PC-3 (cell line): ENCODE measurements at regions of chr5 and their contacts with region 1.

Region 1: DNA sequence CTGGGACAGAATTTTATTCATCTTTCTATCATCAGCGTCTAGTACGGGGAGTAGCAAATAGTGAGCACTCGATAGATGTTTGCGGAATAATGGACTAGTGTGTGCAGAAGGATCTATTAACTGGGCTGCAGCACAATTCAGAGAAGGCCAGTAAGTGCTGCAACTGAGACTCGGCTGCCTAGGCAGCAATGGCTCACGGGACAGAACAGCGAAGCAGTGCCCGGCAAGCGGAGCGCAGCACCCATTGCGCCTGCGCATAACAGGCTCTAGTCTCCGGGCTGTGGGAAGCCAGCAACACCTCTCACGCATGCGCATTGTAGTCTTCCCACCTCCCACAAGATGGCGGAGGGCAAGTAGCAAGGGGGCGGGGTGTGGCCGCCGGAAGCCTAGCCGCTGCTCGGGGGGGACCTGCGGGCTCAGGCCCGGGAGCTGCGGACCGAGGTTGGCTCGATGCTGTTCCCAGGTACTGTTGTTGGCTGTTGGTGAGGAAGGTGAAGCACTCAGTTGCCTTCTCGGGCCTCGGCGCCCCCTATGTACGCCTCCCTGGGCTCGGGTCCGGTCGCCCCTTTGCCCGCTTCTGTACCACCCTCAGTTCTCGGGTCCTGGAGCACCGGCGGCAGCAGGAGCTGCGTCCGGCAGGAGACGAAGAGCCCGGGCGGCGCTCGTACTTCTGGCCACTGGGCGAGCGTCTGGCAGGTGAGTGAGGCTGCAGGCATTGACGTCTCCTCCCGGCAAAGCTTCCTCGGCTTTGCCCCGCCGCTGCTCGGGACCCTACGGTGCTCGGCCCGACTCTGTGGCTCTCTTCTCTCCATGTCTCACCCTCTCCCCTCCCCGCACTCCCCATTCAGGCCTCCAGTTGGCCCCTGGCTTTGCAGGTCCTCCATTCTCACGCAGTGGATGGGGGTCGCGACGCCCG is 30.2 kb upstream of the APC start:
- DNase-seq: peak; percentile 94
- ATAC-seq: peak; percentile 91
- H3K4me3 ChIP-seq: peak overlapping the region; percentile 99
- H3K27ac ChIP-seq: peak overlapping the region; percentile 78
- H3K4me1 ChIP-seq: peaks cover 13% of the 10 kb centered on the region
- H3K27me3 ChIP-seq: no peaks in the 10 kb centered on the region
- CTCF ChIP-seq: no peak

Region 2: DNA sequence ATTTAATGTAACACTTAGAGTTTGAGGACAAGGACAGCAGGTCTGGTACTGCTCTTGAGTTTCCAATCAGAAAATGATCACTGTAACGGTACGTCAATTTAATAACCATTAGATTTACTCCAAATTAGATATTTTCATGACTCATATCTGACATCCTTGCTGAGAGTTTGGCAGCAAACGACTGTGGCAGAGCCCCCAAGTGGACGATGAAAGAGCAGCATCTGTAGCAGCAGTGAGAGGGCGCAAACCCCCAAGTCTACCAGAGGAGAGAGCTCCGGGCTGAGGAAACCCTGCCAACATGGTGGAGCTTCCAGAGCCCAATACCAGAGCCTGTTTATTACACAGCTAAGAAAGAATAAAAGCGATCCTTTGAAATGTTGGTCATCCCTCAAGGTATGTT is 215.2 kb before region 1 on chr5:
- CTCF ChIA-PET with region 1: no interaction called
- POLR2A ChIA-PET with region 1: no interaction called
- intact Hi-C with region 1: no loop called
- DNase-seq: peak; percentile 69
- ATAC-seq: peak; percentile 63; the same call in 1 of the 2 replicates
- H3K4me3 ChIP-seq: no peak overlapping the region
- H3K27ac ChIP-seq: no peak overlapping the region
- H3K4me1 ChIP-seq: no peaks in the 10 kb centered on the region
- H3K27me3 ChIP-seq: peaks cover 22% of the 10 kb centered on the region
- CTCF ChIP-seq: peak; percentile 74

Region 3: GRCh38 chr5:112718344-112718743 is 10.9 kb after region 1 on chr5:
- CTCF ChIA-PET with region 1: no interaction called
- POLR2A ChIA-PET with region 1: no interaction called
- intact Hi-C with region 1: no loop called
- DNase-seq: no peak
- ATAC-seq: no peak
- H3K4me3 ChIP-seq: no peak overlapping the region
- H3K27ac ChIP-seq: no peak overlapping the region
- H3K4me1 ChIP-seq: no peaks in the 10 kb centered on the region
- H3K27me3 ChIP-seq: no peaks in the 10 kb centered on the region
- CTCF ChIP-seq: no peak

Region 4: DNA sequence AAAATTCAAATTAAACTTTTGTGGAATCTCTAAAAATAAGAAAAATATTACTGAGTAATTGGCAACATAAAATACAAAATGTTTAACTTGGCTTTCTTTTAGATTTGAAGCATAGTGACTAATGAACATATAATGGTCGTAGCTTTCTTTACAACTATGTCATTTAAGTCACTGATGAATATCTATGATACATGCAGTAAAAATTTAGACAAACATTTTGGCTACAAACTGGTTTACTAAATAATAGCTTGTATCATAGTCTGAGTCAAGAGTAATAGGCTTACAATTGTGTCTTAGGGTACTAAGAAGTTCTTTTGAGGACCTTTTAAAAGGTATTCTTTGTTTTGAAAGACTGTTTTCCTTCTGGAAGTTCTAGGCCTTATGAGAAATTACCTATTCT is 28.3 kb after region 1 on chr5:
- CTCF ChIA-PET with region 1: no interaction called
- POLR2A ChIA-PET with region 1: no interaction called
- intact Hi-C with region 1: loop called (anchors 2 kb)
- DNase-seq: peak; percentile 87
- ATAC-seq: peak; percentile 91
- H3K4me3 ChIP-seq: no peak overlapping the region
- H3K27ac ChIP-seq: peak overlapping the region; percentile 91
- H3K4me1 ChIP-seq: peaks cover 51% of the 10 kb centered on the region
- H3K27me3 ChIP-seq: no peaks in the 10 kb centered on the region
- CTCF ChIP-seq: no peak